ENCODE measurements at regions of chr11 and their contacts with region 1.

Region 1: DNA sequence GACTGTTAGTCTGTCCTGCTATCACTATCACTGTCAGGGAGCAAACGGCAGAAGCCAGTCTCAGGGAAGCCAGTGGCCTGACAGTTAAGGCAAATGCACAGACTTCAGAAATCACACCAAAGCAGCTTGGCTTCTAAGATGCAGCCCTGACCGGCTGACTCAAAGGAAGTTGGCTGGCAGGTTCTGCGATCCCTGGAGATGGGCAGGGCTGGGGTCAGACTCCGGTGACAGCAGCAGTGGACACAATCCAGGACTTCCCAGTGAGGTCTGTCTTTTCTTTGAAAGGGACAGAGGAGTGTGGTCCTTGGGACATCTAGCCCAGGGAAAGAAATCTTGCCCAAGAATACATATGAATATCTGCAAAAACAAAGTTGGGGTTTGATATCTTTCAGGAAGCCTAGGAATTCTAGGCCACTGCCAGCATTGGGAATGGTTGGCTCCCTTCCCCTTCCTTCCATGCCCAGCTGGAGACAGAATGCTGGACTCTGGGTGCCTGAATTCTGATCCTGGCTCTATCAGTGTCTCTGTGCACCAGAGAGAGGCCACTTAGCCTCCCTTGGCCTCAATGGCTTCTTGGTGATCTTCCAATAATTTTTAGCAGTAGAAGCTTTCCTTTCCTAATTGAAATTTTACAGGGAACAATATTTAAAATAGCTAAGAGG is 108.9 kb downstream of the KIRREL3 start:
- DNase-seq: peak in 2 of 10 donors; percentile 18 to 81

Region 2: GRCh38 chr11:126716456-126717083 is 175.1 kb before region 1 on chr11:
- intact Hi-C with region 1: loop called (anchors 10 kb)
- DNase-seq: peak in 6 of 10 donors; percentile 39 to 93 (median 72)